Activated B cell treated with CpG ODN at 0.5 μM for 24 hours (primary cell): ENCODE measurements at regions of chr2 and their contacts with region 1.

Region 1: GRCh38 chr2:106193977-106194778 is at the start of gene UXS1:
- DNase-seq: peak; percentile 98
- ATAC-seq: peak; percentile 81
- H3K4me3 Mint-ChIP-seq: peak within 1 kb of the TSS; percentile 95
- H3K27ac Mint-ChIP-seq: peak within 1 kb of the TSS; percentile 91
- H3K4me1 Mint-ChIP-seq: peaks cover 42% of the 10 kb centered on the region
- H3K27me3 Mint-ChIP-seq: no peaks in the 10 kb centered on the region
- CTCF ChIP-seq: no peak
- total RNA-seq, gene UXS1: 20.0 and 24.2 TPM in 2 replicates

Region 2: GRCh38 chr2:105802587-105802986 is 391.6 kb before region 1 on chr2:
- CTCF ChIA-PET with region 1: no interaction called
- POLR2A ChIA-PET with region 1: no interaction called
- intact Hi-C with region 1: loop called (anchors 5 kb)
- DNase-seq: peak; percentile 41
- ATAC-seq: peak; percentile 87
- H3K4me3 Mint-ChIP-seq: peak overlapping the region; percentile 65
- H3K27ac Mint-ChIP-seq: peak overlapping the region; percentile 90
- H3K4me1 Mint-ChIP-seq: peaks cover 93% of the 10 kb centered on the region
- H3K27me3 Mint-ChIP-seq: no peaks in the 10 kb centered on the region
- CTCF ChIP-seq: no peak

Region 3: DNA sequence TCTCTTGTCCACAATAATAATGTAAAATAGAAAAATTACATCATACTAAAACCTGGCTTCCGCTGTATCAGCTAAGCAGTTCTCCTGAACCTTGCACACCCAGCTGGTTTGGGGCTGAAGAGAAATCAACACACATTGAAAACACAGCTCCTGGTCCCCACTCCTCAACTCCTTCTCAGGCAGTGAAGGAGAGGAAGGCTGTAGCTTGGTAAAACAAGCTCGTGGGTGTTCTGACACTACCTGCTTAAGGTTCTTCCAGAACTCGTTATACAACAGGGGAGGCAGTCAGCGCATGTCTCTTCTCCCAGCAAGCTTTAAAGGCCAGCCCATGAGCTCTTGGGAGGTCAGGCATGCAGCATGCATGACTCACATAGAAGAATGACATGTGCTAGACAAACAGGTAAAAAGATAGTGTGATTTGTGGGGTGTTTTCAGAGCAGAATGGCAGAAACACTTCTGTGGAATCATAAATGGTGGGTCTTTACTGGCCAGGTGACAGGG is 69.2 kb before region 1 on chr2:
- CTCF ChIA-PET with region 1: no interaction called
- POLR2A ChIA-PET with region 1: no interaction called
- intact Hi-C with region 1: no loop called
- DNase-seq: no peak
- ATAC-seq: no peak
- H3K4me3 Mint-ChIP-seq: no peak overlapping the region
- H3K27ac Mint-ChIP-seq: no peak overlapping the region
- H3K4me1 Mint-ChIP-seq: peaks cover 9% of the 10 kb centered on the region
- H3K27me3 Mint-ChIP-seq: no peaks in the 10 kb centered on the region
- CTCF ChIP-seq: no peak

Region 4: DNA sequence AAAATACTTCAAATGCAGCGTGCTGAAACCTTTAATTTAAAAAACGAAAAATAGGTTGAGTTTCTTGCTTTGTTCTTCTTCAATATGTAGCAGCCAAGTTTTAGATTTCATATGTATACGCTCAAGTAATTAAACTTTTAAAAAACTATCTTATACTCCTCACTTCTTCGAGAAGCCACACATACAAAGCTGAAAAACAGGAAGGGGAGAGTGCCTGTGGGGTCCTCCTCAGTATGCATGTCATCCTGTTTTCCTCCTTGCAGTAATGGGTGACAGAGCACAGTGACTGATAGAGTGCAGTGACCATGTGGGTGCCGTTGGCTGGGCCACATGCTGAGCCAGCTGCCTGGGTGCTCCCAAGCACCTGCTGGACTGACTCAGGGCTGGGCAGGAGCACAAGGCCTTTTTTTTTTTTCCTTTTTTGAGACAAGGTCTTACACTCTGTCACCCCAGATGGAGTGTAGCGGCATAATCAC is 33.4 kb before region 1 on chr2:
- CTCF ChIA-PET with region 1: no interaction called
- POLR2A ChIA-PET with region 1: interaction called, 34 read pairs
- intact Hi-C with region 1: loop called (anchors 1 kb)
- DNase-seq: no peak
- ATAC-seq: peak; percentile 74
- H3K4me3 Mint-ChIP-seq: peak overlapping the region; percentile 88
- H3K27ac Mint-ChIP-seq: peak overlapping the region; percentile 89
- H3K4me1 Mint-ChIP-seq: peaks cover 75% of the 10 kb centered on the region
- H3K27me3 Mint-ChIP-seq: no peaks in the 10 kb centered on the region
- CTCF ChIP-seq: no peak

Region 5: DNA sequence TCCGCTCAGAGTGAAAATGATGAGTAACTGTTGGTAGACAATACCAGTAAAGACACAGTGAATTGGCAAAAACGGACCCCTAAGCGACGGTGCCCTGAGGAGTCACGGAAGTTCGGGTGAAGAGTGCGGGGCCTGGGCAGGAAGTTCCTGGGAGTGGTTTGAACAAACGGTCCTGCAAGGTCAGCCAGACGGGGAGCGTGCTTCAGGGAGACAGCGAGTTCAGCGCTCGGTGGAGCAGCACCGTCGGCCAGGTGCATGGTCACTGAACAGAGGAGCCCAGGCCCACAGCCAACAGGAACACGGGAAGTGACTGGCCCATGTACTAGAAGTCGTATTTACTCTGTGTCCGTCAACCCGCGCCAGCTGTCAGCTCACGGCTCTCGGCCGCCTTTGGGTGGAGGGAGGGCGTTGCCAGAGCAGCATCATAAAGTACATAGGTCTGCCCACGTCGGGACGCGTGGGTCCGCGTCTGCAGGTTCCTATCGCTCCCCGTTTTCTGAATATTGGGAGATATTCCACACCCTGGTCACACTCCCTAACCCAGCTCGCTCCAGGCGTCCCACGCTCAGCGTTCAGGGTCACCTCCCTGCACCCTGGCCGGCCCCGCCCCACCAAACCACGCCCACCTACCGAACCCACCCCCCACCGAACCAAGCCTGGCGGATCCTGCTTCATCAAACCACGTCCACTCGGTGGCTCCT is 75.6 kb after region 1 on chr2:
- CTCF ChIA-PET with region 1: no interaction called
- POLR2A ChIA-PET with region 1: no interaction called
- intact Hi-C with region 1: loop called (anchors 5 kb)
- DNase-seq: peak; percentile 32
- ATAC-seq: peak; percentile 82
- H3K4me3 Mint-ChIP-seq: peak overlapping the region; percentile 91
- H3K27ac Mint-ChIP-seq: no peak overlapping the region
- H3K4me1 Mint-ChIP-seq: peaks cover 16% of the 10 kb centered on the region
- H3K27me3 Mint-ChIP-seq: peaks cover 6% of the 10 kb centered on the region
- CTCF ChIP-seq: no peak